ENCODE measurements at regions of chr9 and their contacts with region 1.

Region 1: DNA sequence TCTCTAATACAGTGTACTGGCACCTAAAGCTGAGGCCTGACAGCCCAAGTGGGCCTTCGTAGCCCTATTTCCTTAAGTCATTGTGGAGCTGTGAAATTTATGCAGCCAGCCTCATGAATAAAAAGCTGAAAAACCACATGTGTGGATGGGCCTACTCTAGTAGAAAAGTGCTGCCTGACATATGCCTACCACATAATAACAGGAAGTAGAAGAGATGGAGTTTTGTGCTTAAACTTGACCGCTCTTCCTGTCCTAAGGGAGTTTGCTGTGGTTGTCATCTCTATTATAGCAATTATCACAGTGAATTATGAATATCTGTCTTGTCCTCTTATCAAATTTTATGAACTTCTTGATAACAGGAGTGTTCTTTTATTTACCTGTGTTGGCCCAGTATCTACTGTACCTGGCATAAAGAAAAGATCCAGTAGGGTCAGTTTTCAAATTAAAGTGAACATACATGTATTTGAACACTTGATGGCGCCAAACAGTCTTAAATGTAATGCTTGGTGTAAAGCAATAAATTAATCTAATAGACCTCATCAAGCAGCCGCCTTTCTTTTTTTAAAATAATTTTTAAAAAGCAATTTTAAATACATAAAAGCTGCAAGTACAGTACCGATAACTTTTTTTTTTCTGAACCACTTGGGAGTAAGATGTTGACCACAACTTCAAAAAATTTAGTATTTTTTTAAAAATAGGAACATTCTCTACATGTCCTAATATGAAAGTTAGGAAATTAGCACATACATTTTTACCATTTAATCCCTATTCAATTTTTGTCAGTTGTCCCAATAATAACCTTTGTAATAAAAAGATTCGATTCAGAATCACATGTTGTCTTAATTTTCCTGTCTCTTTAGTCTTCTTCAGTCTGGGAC is 51.0 kb downstream of the FKTN start:
- DNase-seq: peak in 1 of 3 donors; percentile 7
- ATAC-seq: peak; percentile 64
- H3K4me3 ChIP-seq: no peak overlapping the region
- H3K4me1 ChIP-seq: no peaks in the 10 kb centered on the region
- CTCF ChIP-seq: no peak

Region 2: GRCh38 chr9:105716146-105716545 is 107.2 kb after region 1 on chr9:
- intact Hi-C with region 1: loop called in 1 of 2 experiments (anchors 5 kb)
- DNase-seq: no peak
- ATAC-seq: no peak
- H3K4me3 ChIP-seq: no peak overlapping the region
- H3K4me1 ChIP-seq: no peaks in the 10 kb centered on the region
- CTCF ChIP-seq: no peak

Region 3: GRCh38 chr9:105881654-105882349 is 272.8 kb after region 1 on chr9:
- intact Hi-C with region 1: loop called in 1 of 2 experiments (anchors 5 kb)
- DNase-seq: peak in 2 of 3 donors; percentile 60 to 85
- ATAC-seq: peak; percentile 70
- H3K4me3 ChIP-seq: no peak overlapping the region
- H3K4me1 ChIP-seq: no peaks in the 10 kb centered on the region
- CTCF ChIP-seq: peak; percentile 68

Region 4: GRCh38 chr9:105930011-105930627 is 321.2 kb after region 1 on chr9:
- intact Hi-C with region 1: no loop called
- DNase-seq: no peak
- ATAC-seq: no peak
- H3K4me3 ChIP-seq: no peak overlapping the region
- H3K4me1 ChIP-seq: no peaks in the 10 kb centered on the region
- CTCF ChIP-seq: no peak

Measured in mucosa of descending colon (tissue), 3 donors.